B cell (primary cell): ENCODE measurements at regions of chr7 and their contacts with region 1.

Region 1: GRCh38 chr7:22445140-22445743 is 54.7 kb downstream of the STEAP1B start:
- DNase-seq: peak; percentile 63
- ATAC-seq: peak; percentile 42
- H3K4me3 ChIP-seq: peak overlapping the region in 2 of 5 experiments; percentile 5 to 34
- H3K4me3 Mint-ChIP-seq: peak overlapping the region; percentile 72
- H3K27ac ChIP-seq: peak overlapping the region; percentile 69 to 77
- H3K27ac Mint-ChIP-seq: peak overlapping the region; percentile 92
- H3K4me1 ChIP-seq: peaks cover 46 to 51% of the 10 kb centered on the region in 2 donors
- H3K4me1 Mint-ChIP-seq: peaks cover 67% of the 10 kb centered on the region
- H3K27me3 ChIP-seq: no peaks in the 10 kb centered on the region
- H3K27me3 Mint-ChIP-seq: no peaks in the 10 kb centered on the region
- CTCF ChIP-seq: no peak

Region 2: GRCh38 chr7:22356701-22357353 is 88.4 kb before region 1 on chr7 and contains the start of gene RAPGEF5:
- CTCF ChIA-PET with region 1: no interaction called
- POLR2A ChIA-PET with region 1: no interaction called
- intact Hi-C with region 1: loop called (anchors 5 kb)
- DNase-seq: peak; percentile 55
- ATAC-seq: peak; percentile 82
- H3K4me3 ChIP-seq: peak within 1 kb of the TSS; percentile 43 to 59 (median 50)
- H3K4me3 Mint-ChIP-seq: peak within 1 kb of the TSS; percentile 89
- H3K27ac ChIP-seq: no peak within 1 kb of the TSS
- H3K27ac Mint-ChIP-seq: peak within 1 kb of the TSS; percentile 16
- H3K4me1 ChIP-seq: peaks cover 14 to 15% of the 10 kb centered on the region in 2 donors
- H3K4me1 Mint-ChIP-seq: peaks cover 20% of the 10 kb centered on the region
- H3K27me3 ChIP-seq: peaks cover 0 to 13% (median 4%) of the 10 kb centered on the region in 4 experiments
- H3K27me3 Mint-ChIP-seq: peaks cover 30% of the 10 kb centered on the region
- CTCF ChIP-seq: no peak
- total RNA-seq, gene RAPGEF5: 36.7 and 37.6 TPM in 2 replicates